ENCODE measurements at regions of chr15 and their contacts with region 1.

Region 1: DNA sequence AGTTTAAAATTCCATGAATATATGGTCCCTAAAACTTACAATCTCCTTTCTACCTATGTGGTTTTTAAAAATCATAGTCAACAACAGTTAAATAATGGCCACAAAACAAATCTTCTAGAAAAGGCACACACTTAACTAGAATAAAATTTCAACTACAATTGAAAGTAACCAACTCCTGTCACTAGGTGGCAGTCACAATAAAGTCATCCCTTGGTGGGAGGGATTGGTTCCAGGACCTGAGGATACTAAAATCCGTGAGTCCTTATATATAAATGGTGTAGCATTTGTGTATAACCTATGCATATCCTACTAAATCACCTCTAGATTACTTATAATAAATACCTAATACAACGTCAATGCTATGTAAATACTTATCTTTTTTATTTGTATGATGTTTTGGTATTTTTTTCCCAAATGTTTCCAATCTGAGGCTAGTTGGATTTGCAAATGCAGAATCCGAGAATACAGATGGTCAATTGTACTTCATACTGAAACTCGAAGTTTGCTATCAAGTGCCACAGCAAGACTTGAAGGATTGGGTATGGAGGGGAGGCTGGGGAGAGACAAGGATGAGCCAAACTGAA is 172.6 kb downstream of the FMN1 start:
- DNase-seq: peak; percentile 85
- ATAC-seq: peak; percentile 64
- H3K4me3 ChIP-seq: no peak overlapping the region
- H3K27ac ChIP-seq: peak overlapping the region; percentile 33
- H3K4me1 ChIP-seq: peaks cover 13% of the 10 kb centered on the region
- H3K27me3 ChIP-seq: no peaks in the 10 kb centered on the region
- CTCF ChIP-seq: peak; percentile 89

Region 2: GRCh38 chr15:33034588-33034987 is 12.7 kb after region 1 on chr15:
- CTCF ChIA-PET with region 1: no interaction called
- POLR2A ChIA-PET with region 1: no interaction called
- intact Hi-C with region 1: no loop called
- DNase-seq: no peak
- ATAC-seq: no peak
- H3K4me3 ChIP-seq: no peak overlapping the region
- H3K27ac ChIP-seq: no peak overlapping the region
- H3K4me1 ChIP-seq: peaks cover 24% of the 10 kb centered on the region
- H3K27me3 ChIP-seq: no peaks in the 10 kb centered on the region
- CTCF ChIP-seq: no peak

Region 3: GRCh38 chr15:33067941-33068481 is 46.1 kb after region 1 on chr15:
- CTCF ChIA-PET with region 1: interaction called, 6 read pairs
- POLR2A ChIA-PET with region 1: interaction called, 5 read pairs
- intact Hi-C with region 1: loop called (anchors 1 kb)
- DNase-seq: peak; percentile 71
- ATAC-seq: peak; percentile 68
- H3K4me3 ChIP-seq: peak overlapping the region; percentile 43
- H3K27ac ChIP-seq: peak overlapping the region; percentile 95
- H3K4me1 ChIP-seq: peaks cover 48% of the 10 kb centered on the region
- H3K27me3 ChIP-seq: no peaks in the 10 kb centered on the region
- CTCF ChIP-seq: no peak

Region 4: DNA sequence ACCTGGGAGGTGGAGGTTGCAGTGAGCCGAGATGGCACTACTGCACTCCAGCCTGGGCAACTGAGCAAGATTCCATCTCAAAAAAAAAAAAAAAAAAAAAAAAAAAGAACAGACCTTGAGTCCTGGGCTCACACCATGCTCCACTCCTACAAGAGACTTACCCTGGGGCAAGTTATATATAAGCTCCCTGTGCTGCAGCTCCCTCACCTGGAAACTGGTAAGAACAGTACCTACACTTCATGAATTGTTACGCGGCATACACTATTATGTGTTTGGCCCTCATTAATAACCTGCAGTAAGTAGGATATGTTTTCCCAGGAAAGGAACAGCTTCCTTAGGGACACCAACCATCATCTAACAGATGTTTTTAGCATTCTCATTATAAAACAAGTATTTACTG is 53.0 kb after region 1 on chr15:
- CTCF ChIA-PET with region 1: interaction called, 8 read pairs
- POLR2A ChIA-PET with region 1: no interaction called
- intact Hi-C with region 1: loop called (anchors 1 kb)
- DNase-seq: peak; percentile 58
- ATAC-seq: peak; percentile 63
- H3K4me3 ChIP-seq: no peak overlapping the region
- H3K27ac ChIP-seq: no peak overlapping the region
- H3K4me1 ChIP-seq: no peaks in the 10 kb centered on the region
- H3K27me3 ChIP-seq: no peaks in the 10 kb centered on the region
- CTCF ChIP-seq: peak; percentile 55

Region 5: DNA sequence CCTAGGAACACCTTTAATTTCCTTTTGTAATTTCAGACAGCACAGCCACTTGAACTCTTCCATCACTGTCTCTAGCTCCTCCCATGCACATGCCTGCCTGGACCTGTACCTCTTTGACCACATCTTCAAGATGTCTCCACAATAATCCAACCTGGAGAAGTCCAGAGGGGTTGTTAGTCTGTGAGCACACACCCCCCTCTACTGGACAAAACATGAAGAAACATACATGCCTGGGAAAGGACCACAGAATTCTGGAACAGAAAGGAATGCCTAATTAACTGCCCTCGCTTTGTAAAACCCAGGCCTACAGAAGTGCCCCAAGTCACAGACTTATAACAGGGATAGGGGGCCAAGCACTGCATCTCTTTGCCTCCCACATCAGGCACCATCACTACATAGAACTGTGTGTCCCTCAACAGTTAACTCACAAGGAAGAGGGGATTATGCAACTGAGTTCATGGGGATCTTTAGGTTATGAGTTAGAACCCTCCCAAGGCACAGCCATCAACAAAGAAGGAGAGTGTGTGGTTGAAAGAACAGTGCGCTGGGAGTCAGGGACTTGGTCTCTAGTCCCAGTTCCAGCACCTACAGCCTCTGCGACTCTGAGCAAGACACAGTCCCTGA is 110.9 kb after region 1 on chr15:
- CTCF ChIA-PET with region 1: interaction called, 13 read pairs
- POLR2A ChIA-PET with region 1: interaction called, 6 read pairs
- intact Hi-C with region 1: loop called (anchors 1 kb)
- DNase-seq: peak; percentile 85
- ATAC-seq: peak; percentile 96
- H3K4me3 ChIP-seq: no peak overlapping the region
- H3K27ac ChIP-seq: no peak overlapping the region
- H3K4me1 ChIP-seq: peaks cover 16% of the 10 kb centered on the region
- H3K27me3 ChIP-seq: no peaks in the 10 kb centered on the region
- CTCF ChIP-seq: peak; percentile 91

Region 6: DNA sequence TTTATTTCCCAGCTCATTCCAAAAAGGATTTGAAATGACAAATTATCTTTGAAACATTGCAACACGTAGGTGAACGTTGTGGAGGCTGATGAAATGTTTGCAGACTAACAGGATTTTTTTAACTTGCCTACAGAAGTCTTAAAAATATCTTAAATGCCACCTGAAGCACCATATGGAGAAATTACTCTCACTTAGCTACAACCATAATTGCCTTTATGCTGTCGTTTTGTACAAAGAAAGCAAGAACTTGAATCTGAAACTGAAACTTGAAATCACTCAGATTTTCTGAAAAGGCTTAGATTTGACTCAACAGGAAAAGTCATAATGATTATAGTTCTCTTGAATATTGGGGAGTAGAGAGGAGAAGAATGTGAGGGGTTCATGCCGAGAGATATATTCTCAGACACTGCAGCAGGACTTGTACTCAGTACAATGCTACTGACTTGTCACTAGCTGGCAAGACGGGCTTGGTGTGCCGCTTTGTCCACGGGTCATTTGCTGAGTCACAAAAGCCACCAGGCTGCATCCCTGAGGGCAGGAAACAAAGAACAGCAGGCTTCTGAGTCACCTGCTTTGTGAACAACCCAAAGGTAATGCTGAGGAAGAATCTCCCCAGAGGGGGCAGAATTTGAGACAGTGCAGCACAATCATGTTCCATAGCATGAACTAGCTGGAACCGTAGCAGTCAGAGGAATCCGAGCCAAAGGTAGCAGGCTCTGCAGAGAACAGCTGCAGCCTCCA is 179.8 kb after region 1 on chr15:
- CTCF ChIA-PET with region 1: no interaction called
- POLR2A ChIA-PET with region 1: no interaction called
- intact Hi-C with region 1: loop called (anchors 10 kb)
- DNase-seq: peak; percentile 98
- ATAC-seq: peak; percentile 98
- H3K4me3 ChIP-seq: peak overlapping the region; percentile 60
- H3K27ac ChIP-seq: peak overlapping the region; percentile 27; the same call in 1 of the 2 replicates
- H3K4me1 ChIP-seq: peaks cover 28% of the 10 kb centered on the region
- H3K27me3 ChIP-seq: no peaks in the 10 kb centered on the region
- CTCF ChIP-seq: peak; percentile 66